ENCODE measurements at regions of chrX and their contacts with region 1.

Region 1: DNA sequence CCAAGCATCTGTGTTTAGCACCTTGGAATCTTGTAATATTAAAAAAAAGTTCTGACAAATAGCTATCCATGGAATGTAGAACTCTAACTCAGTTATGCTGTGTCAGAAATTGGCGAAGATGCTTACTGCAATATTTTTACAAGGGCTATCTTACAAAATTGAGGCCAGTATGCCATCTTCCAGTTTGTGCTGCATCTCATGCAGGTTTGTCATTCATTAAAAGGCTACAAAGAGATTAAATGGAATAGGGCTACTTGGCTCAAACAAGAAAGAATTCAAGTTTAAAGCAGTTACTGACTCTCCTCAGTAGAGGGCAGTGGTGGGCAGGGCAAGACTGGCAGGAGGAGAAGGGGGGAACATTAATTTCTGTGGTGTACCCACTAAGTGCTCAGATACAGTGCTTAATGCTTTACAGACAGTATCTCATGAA is 66.5 kb downstream of the SHROOM4 start:
- DNase-seq: no peak
- ATAC-seq: peak in 1 of 2 donors; percentile 43
- H3K4me3 ChIP-seq: no peak overlapping the region
- H3K27ac ChIP-seq: no peak overlapping the region
- H3K4me1 ChIP-seq: no peaks in the 10 kb centered on the region
- H3K27me3 ChIP-seq: no peaks in the 10 kb centered on the region

Region 2: DNA sequence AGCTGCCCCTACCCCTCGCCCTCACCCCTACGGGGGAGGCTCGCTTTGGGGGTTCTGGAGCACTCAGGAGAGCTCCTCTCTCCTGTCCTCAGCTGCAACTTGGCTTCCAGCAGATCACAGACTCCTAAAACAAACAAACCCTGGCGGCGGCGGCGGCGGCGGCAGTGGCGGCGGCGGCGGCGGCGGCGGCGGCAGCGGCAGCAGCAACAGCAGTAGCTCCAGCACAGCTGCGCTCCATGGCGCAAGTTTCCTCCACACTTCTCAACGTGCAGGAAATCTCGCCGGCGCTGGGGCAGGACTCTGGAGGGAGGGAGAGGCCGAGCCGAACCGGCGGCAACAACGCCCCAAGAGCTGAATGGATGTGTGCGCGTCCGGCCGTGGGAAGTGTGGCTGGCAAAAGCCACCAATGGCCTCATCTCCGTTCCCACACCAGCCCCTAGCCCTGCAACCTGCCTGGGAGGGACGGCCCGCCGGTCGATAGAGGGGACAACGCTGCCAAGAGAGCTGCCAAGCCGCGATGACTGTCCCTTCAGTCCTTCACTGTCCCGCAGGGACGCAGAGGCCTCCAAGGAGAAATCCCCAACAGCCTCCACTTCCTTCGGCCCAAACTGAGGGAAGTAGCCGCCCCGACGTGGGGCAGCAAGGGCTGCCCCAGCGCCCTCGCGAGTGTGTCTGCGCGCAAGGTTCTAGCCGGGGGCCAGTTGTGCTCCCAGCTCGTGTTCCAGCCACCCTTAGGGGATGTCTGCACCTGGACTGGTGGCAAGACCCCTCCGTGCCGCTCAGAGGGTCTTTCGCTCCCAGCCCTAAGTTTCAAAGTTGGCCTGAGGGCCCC is 65.7 kb after region 1 on chrX:
- intact Hi-C with region 1: loop called in 1 of 4 experiments (anchors 10 kb)
- DNase-seq: peak; percentile 54 to 81 (median 73)
- ATAC-seq: peak; percentile 81 to 85
- H3K4me3 ChIP-seq: peak overlapping the region; percentile 57
- H3K27ac ChIP-seq: peak overlapping the region; percentile 71
- H3K4me1 ChIP-seq: peaks cover 3% of the 10 kb centered on the region
- H3K27me3 ChIP-seq: no peaks in the 10 kb centered on the region

Region 3: DNA sequence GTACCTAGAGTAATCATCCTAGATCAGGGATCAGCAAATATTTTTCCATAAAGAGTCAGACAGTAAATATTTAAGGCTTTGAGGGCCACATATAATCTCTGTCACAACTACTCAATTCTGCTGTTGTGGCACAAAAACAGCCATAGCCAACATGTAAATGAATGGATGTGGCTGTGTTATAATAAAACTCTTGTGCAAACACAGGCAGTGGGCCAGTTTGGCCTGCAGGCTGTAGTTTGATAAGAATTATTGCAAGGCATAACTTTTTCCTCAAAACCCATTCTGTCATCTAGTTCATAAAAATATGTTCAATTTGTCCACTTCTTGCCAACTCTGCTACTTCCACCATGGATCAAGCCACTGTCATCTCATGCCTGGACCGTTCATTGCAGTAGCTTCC is 105.9 kb after region 1 on chrX:
- intact Hi-C with region 1: no loop called
- DNase-seq: peak; percentile 18 to 70 (median 58)
- ATAC-seq: no peak
- H3K4me3 ChIP-seq: no peak overlapping the region
- H3K27ac ChIP-seq: no peak overlapping the region
- H3K4me1 ChIP-seq: no peaks in the 10 kb centered on the region
- H3K27me3 ChIP-seq: no peaks in the 10 kb centered on the region

Region 4: GRCh38 chrX:50905334-50905733 is 157.8 kb after region 1 on chrX:
- intact Hi-C with region 1: loop called in 3 of 4 experiments (anchors 2 to 10 kb)
- DNase-seq: no peak
- ATAC-seq: no peak
- H3K4me3 ChIP-seq: no peak overlapping the region
- H3K27ac ChIP-seq: no peak overlapping the region
- H3K4me1 ChIP-seq: no peaks in the 10 kb centered on the region
- H3K27me3 ChIP-seq: no peaks in the 10 kb centered on the region

Region 5: GRCh38 chrX:50920132-50920531 is 172.6 kb after region 1 on chrX:
- intact Hi-C with region 1: loop called in 1 of 4 experiments (anchors 5 kb)
- DNase-seq: no peak
- ATAC-seq: no peak
- H3K4me3 ChIP-seq: no peak overlapping the region
- H3K27ac ChIP-seq: no peak overlapping the region
- H3K4me1 ChIP-seq: no peaks in the 10 kb centered on the region
- H3K27me3 ChIP-seq: no peaks in the 10 kb centered on the region

Region 6: GRCh38 chrX:50996930-50997329 is 249.4 kb after region 1 on chrX:
- intact Hi-C with region 1: no loop called
- DNase-seq: no peak
- ATAC-seq: no peak
- H3K4me3 ChIP-seq: no peak overlapping the region
- H3K27ac ChIP-seq: no peak overlapping the region
- H3K4me1 ChIP-seq: no peaks in the 10 kb centered on the region
- H3K27me3 ChIP-seq: no peaks in the 10 kb centered on the region